MCF 10A (cell line): ENCODE measurements at regions of chr2 and their contacts with region 1.

Region 1: GRCh38 chr2:34012715-34013302 is 413.7 kb upstream of the FAM98A start:
- DNase-seq: peak; percentile 66
- H3K4me3 Mint-ChIP-seq: no peak overlapping the region
- H3K27ac Mint-ChIP-seq: peak overlapping the region; percentile 3
- H3K4me1 Mint-ChIP-seq: peaks cover 6% of the 10 kb centered on the region
- H3K27me3 Mint-ChIP-seq: no peaks in the 10 kb centered on the region
- CTCF ChIP-seq: peak; percentile 80

Region 2: DNA sequence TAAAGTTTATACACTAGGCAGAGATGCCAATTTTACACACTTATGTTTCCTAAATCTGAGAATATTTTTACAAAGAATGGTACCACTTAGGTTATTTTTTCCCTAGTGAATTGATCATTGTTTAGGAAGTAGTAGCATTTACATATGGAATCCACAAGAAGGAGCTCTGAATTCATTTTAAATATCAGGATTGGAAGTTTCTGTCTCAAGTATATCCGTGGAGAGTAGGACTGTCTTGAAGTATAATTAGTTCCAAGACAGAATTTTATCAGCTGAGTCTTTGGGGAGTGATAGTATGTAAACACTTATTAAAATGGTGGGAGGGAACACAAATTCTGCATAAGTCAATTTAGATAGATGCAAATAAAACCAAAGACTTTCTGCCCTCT is 331.4 kb before region 1 on chr2:
- CTCF ChIA-PET with region 1: interaction called, 10 read pairs
- POLR2A ChIA-PET with region 1: no interaction called
- intact Hi-C with region 1: loop called (anchors 2 kb)
- DNase-seq: no peak
- H3K4me3 Mint-ChIP-seq: no peak overlapping the region
- H3K27ac Mint-ChIP-seq: no peak overlapping the region
- H3K4me1 Mint-ChIP-seq: no peaks in the 10 kb centered on the region
- H3K27me3 Mint-ChIP-seq: no peaks in the 10 kb centered on the region
- CTCF ChIP-seq: peak; percentile 57

Region 3: GRCh38 chr2:34025186-34025585 is 12.4 kb after region 1 on chr2:
- CTCF ChIA-PET with region 1: interaction called, 20 read pairs
- POLR2A ChIA-PET with region 1: no interaction called
- intact Hi-C with region 1: no loop called
- DNase-seq: no peak
- H3K4me3 Mint-ChIP-seq: no peak overlapping the region
- H3K27ac Mint-ChIP-seq: no peak overlapping the region
- H3K4me1 Mint-ChIP-seq: no peaks in the 10 kb centered on the region
- H3K27me3 Mint-ChIP-seq: no peaks in the 10 kb centered on the region
- CTCF ChIP-seq: no peak

Region 4: DNA sequence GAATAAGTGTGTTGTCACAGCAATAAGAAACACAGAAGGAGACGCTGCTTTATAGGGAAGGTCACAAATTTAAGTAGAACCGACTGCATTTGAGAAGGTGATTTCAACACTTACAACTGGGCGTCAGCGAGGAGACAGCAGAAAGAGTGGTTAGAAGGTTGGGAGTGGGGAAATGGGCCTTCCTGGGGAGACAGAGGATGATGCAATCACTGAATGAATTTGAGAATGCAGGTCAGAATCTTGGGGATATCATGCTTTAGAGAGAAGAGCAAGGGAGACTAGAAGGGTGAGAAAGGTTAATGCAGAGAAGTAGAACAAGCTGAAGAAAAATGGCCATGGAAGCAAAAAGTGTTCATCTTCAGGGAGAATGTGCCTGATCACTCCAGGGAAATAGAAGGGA is 202.4 kb after region 1 on chr2:
- CTCF ChIA-PET with region 1: no interaction called
- POLR2A ChIA-PET with region 1: no interaction called
- intact Hi-C with region 1: no loop called
- DNase-seq: no peak
- H3K4me3 Mint-ChIP-seq: no peak overlapping the region
- H3K27ac Mint-ChIP-seq: no peak overlapping the region
- H3K4me1 Mint-ChIP-seq: peaks cover 7% of the 10 kb centered on the region
- H3K27me3 Mint-ChIP-seq: no peaks in the 10 kb centered on the region
- CTCF ChIP-seq: no peak